HepG2 (cell line): ENCODE measurements at regions of chr12 and their contacts with region 1.

Region 1: GRCh38 chr12:79414261-79414722 is 276.5 kb downstream of the PAWR start:
- DNase-seq: no peak
- ATAC-seq: no peak
- H3K4me3 ChIP-seq: no peak overlapping the region
- H3K27ac ChIP-seq: no peak overlapping the region
- H3K4me1 ChIP-seq: peaks cover 18% of the 10 kb centered on the region
- H3K27me3 ChIP-seq: no peaks in the 10 kb centered on the region
- CTCF ChIP-seq: no peak
- EP300 ChIP-seq: no peak
- POLR2A ChIP-seq: no peak
- RAD21 ChIP-seq: no peak

Region 2: DNA sequence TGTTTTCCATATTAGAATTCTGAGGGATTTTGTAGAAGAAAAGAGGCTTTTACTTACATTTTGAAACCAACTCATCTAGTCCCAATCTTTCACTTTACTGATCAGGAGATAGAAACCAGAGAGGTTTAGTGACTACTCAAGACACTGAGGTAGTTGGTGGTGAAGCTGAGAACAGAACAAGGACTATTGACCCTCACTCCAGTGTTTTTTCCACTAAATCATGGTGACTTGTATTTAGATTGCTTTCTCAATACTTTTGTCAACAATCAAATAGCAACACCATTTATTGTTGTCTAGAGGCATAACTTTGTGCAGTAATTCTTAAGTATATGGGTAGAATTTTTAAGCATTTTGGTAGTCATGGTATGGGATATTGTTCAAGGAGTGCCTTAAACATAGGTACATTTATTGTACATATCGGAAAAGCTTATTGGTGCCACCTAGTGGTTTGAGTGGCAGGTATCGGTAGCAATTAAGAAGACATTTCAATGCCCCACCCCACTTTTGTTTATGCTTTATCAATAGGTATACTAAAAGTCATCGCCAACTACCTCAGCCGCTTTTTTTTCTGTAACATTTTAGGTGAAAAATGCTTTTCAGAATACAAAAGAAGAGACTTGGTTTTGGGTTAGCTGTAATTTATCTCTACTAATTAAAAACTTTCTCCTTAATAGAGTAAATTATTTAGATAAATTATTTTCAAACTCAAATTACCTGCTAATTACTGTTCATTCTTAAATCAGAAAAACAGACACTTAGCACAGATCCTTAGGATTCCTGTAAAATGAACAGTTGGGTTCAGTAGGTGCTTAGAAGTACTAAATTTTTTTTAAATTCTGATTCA is 323.8 kb after region 1 on chr12:
- CTCF ChIA-PET with region 1: no interaction called
- POLR2A ChIA-PET with region 1: no interaction called
- in situ Hi-C with region 1: loop called (anchors 5 kb)
- intact Hi-C with region 1: no loop called
- DNase-seq: peak; percentile 68
- ATAC-seq: peak; percentile 84
- H3K4me3 ChIP-seq: no peak overlapping the region
- H3K27ac ChIP-seq: no peak overlapping the region
- H3K4me1 ChIP-seq: peaks cover 6% of the 10 kb centered on the region
- H3K27me3 ChIP-seq: no peaks in the 10 kb centered on the region
- CTCF ChIP-seq: peak; percentile 77
- EP300 ChIP-seq: no peak
- POLR2A ChIP-seq: no peak
- RAD21 ChIP-seq: peak; percentile 46; the same call in 1 of the 2 replicates